ENCODE measurements at regions of chr20 and their contacts with region 1.

Region 1: DNA sequence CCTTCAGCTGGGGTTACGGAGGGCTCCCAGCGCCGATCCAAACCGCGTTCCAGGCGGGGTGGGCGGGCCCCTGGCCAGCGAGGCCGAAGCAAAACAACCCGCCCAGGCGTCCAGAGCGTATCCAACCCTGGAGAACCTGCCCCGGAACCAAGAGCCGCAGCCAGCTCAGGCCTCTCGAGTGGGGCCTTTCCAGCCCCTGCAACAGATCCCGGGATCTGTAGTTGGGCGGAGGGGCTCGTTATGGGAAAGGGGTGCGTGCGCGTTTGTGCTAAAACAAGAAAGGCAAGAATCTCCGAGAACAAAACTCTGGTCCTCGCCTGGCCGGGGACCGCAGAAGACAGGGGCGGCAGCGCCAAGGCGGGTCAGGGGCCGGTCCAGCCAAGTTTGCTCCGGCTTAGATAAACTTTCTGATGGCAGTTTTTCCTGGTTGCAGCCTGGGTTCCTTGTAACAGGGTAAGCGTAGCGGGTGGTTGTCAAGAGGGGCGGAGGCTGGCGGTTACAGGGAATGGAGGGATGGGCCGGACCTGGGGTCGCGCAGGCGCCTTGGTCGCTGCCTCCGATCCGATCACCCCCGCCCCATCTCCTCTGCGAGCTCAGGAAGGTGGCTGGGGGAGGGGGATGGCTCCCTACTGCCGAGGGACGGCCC is 448 bp upstream of the RIN2 start:
- DNase-seq: peak; percentile 97
- H3K4me3 ChIP-seq: peak overlapping the region; percentile 81
- H3K4me3 Mint-ChIP-seq: peak overlapping the region; percentile 97
- H3K27ac Mint-ChIP-seq: peak overlapping the region; percentile 96
- H3K4me1 ChIP-seq: peaks cover 5% of the 10 kb centered on the region; the same call in 1 of the 2 replicates
- H3K4me1 Mint-ChIP-seq: peaks cover 54% of the 10 kb centered on the region
- H3K27me3 ChIP-seq: no peaks in the 10 kb centered on the region
- H3K27me3 Mint-ChIP-seq: no peaks in the 10 kb centered on the region
- CTCF ChIP-seq: no peak

Region 2: DNA sequence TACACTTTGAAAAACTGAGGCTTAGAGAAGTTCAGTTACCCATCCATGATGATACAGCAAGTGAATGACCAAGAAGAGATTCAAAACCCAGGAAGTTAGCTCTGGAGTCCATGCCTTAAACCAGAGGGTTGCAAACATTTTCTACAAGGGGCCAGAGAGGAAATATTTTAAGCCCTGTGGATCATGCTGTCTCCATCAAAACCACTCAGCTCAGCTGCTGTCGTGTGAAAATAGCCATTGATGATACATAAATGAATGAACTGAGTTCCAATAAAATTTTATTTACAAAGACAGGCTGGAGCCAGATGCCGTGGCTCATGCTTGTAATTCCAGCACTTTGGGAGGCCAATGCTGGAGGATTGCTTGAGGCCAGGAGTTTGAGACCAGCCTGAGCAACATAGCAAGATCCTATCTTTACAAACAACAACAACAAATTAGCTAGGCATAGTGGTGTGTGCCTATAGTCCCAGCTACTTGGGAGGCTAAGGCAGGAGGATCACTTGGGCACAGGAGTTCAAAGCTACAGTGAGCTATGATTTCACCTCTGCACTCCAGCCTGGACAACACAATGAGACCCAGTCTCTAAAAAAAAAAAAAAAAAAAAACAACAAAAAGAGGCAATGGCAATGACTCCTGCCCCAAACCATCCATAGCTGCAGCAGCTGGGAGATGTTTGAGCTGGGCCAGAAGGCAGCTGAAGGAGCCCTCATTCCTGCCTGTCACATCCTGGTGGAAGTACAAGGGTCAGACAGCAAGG is 43.6 kb before region 1 on chr20:
- CTCF ChIA-PET with region 1: no interaction called
- POLR2A ChIA-PET with region 1: interaction called, 24 read pairs
- intact Hi-C with region 1: no loop called
- DNase-seq: peak; percentile 42 to 60
- H3K4me3 ChIP-seq: no peak overlapping the region
- H3K4me3 Mint-ChIP-seq: no peak overlapping the region
- H3K27ac Mint-ChIP-seq: peak overlapping the region; percentile 84
- H3K4me1 ChIP-seq: peaks cover 42% of the 10 kb centered on the region
- H3K4me1 Mint-ChIP-seq: peaks cover 20% of the 10 kb centered on the region
- H3K27me3 ChIP-seq: no peaks in the 10 kb centered on the region
- H3K27me3 Mint-ChIP-seq: no peaks in the 10 kb centered on the region
- CTCF ChIP-seq: no peak

Region 3: DNA sequence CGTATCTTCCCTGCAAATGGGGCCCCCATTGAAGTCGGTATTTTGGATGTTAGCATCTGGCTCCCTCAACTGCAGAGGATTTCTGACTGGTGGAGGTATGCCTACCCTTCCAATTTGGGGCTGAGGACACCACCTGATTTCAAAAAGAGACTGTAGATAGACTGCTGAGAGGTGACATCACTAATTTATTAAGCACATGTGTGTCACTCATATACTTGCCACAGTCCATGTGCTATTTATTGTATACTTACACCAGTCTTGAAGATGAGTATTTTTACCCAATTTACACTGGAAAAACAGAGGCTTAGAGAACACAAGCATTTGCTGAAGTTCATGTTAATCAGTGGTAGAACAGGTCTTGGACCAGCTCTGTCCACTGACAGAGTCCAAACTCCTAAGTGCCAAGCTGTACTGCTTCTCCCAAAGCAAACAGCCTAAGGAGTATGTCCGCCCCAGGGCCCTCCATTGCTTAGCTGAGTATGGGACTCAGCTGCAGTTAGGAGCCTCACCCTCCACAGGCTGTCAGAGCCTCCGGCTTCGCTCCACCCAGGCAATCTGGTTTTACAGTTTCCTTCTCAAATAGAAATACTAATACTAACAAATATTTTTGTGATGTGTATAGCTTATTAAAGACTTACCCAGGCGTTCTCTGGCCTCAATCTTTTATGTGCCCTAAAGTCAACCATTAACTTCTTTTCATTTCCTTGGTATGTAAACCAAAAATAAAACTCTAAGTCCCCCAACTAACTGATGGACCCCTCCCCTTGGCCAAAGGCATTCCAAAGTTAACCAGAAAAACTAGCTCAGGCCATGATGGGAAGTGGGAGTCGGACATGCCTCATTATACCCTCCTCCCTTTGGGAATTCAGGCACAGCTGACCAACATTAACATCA is 18.0 kb after region 1 on chr20:
- CTCF ChIA-PET with region 1: interaction called, 18 read pairs
- POLR2A ChIA-PET with region 1: interaction called, 21 read pairs
- intact Hi-C with region 1: loop called (anchors 1 kb)
- DNase-seq: peak; percentile 90 to 92
- H3K4me3 ChIP-seq: no peak overlapping the region
- H3K4me3 Mint-ChIP-seq: no peak overlapping the region
- H3K27ac Mint-ChIP-seq: no peak overlapping the region
- H3K4me1 ChIP-seq: peaks cover 49% of the 10 kb centered on the region
- H3K4me1 Mint-ChIP-seq: peaks cover 15% of the 10 kb centered on the region
- H3K27me3 ChIP-seq: no peaks in the 10 kb centered on the region
- H3K27me3 Mint-ChIP-seq: no peaks in the 10 kb centered on the region
- CTCF ChIP-seq: no peak

Region 4: GRCh38 chr20:19974626-19975435 is 217.2 kb after region 1 on chr20:
- CTCF ChIA-PET with region 1: no interaction called
- POLR2A ChIA-PET with region 1: interaction called, 16 read pairs
- intact Hi-C with region 1: no loop called
- DNase-seq: peak; percentile 60 to 75
- H3K4me3 ChIP-seq: peak overlapping the region; percentile 51
- H3K4me3 Mint-ChIP-seq: peak overlapping the region; percentile 81
- H3K27ac Mint-ChIP-seq: peak overlapping the region; percentile 89
- H3K4me1 ChIP-seq: peaks cover 41% of the 10 kb centered on the region
- H3K4me1 Mint-ChIP-seq: peaks cover 41% of the 10 kb centered on the region
- H3K27me3 ChIP-seq: no peaks in the 10 kb centered on the region
- H3K27me3 Mint-ChIP-seq: no peaks in the 10 kb centered on the region
- CTCF ChIP-seq: no peak